ENCODE measurements at regions of chr3 and their contacts with region 1.

Region 1: GRCh38 chr3:42080452-42080891 is 10.7 kb upstream of the TRAK1 start:
- DNase-seq: no peak
- ATAC-seq: peak; percentile 69
- H3K4me3 ChIP-seq: no peak overlapping the region
- H3K27ac ChIP-seq: peak overlapping the region in 1 of 2 donors; percentile 89
- H3K4me1 ChIP-seq: peaks cover 3 to 14% of the 10 kb centered on the region in 2 donors
- H3K27me3 ChIP-seq: no peaks in the 10 kb centered on the region

Region 2: GRCh38 chr3:42032693-42033349 is 47.7 kb before region 1 on chr3:
- intact Hi-C with region 1: loop called in 1 of 2 experiments (anchors 5 kb)
- DNase-seq: peak; percentile 88 to 91
- ATAC-seq: peak; percentile 81
- H3K4me3 ChIP-seq: no peak overlapping the region
- H3K27ac ChIP-seq: peak overlapping the region; percentile 44 to 96
- H3K4me1 ChIP-seq: peaks cover 0 to 7% of the 10 kb centered on the region in 2 donors
- H3K27me3 ChIP-seq: no peaks in the 10 kb centered on the region

Region 3: GRCh38 chr3:42159706-42160472 is 79.4 kb after region 1 on chr3:
- intact Hi-C with region 1: no loop called
- DNase-seq: no peak
- ATAC-seq: peak; percentile 71
- H3K4me3 ChIP-seq: no peak overlapping the region
- H3K27ac ChIP-seq: no peak overlapping the region
- H3K4me1 ChIP-seq: no peaks in the 10 kb centered on the region
- H3K27me3 ChIP-seq: no peaks in the 10 kb centered on the region

Measured in aorta (tissue), 5 donors.